WTC11 (cell line): ENCODE measurements at regions of chr11 and their contacts with region 1.

Region 1: DNA sequence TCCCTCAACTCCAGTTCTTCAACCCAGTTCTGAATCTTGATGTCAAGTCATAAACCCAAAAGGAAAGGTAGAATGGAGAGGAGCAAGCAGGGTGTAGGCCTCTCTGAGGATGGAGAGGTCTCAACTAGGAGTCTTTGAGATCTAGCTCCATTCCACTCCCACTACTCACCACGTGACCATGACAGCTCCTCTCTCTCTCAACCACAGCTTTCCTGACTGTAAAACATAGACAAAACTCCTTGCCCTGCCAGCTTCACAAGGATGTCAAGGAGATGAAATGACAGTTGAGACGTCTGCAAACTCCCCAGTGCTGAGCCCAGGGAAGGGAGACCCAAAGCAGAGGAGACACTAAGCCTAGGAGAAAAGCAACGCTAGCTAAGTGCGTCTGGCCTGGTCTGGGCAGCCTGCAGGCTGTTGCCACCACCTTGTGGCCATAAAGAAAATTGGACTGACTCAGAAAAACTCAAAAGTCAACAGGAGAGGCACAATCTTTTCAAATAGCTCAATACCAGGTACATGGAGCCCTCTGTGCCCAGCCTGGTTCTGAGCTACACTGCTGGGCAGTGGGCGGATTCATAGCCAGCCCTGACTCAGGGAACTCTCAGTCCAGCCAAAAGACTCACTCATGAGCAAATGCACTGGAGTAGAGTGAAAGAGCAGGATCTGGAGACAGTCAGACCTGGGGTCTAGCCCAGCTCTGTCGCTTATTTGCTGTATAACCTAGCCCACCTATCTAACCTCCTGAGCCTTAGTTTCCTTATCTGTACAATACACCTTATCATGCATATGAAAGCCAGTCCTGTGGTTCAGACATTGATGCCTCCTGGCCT is 3.4 kb downstream of the CLPB start:
- DNase-seq: peak; percentile 31
- ATAC-seq: peak; percentile 24
- H3K4me3 Mint-ChIP-seq: no peak overlapping the region
- H3K27ac Mint-ChIP-seq: peak overlapping the region; percentile 86
- H3K4me1 Mint-ChIP-seq: peaks cover 9% of the 10 kb centered on the region
- H3K27me3 Mint-ChIP-seq: no peaks in the 10 kb centered on the region
- CTCF ChIP-seq: peak; percentile 39; the same call in 1 of the 2 replicates

Region 2: DNA sequence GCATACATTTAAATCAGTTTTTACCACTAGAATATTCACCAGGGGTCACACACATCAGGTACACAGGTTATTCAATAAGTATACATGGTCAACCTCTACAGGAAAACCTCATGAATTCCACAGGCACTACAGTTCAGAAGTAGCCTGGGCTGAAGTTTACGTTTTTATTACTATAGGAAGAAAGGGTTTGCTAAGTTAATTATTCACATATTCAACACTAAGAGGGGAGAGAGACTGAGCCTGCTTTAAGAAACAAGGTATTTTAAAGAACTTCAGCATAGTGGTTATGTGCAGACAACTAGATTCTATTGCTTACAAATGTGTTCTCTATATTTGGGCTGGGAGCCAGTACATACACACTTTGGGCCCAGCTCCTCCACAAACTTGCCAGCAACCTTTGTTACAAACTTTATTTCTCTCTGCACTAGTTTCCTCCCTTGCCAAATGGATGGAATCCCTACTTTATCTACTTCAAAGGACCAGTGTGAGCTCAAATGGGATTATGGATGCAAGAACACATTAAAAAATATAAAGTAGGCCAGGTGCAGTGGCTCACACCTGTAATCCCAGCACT is 400.4 kb before region 1 on chr11:
- CTCF ChIA-PET with region 1: interaction called, 20 read pairs
- POLR2A ChIA-PET with region 1: no interaction called
- DNase-seq: no peak
- ATAC-seq: no peak
- H3K4me3 Mint-ChIP-seq: no peak overlapping the region
- H3K27ac Mint-ChIP-seq: no peak overlapping the region
- H3K4me1 Mint-ChIP-seq: peaks cover 2% of the 10 kb centered on the region; the same call in 1 of the 2 replicates
- H3K27me3 Mint-ChIP-seq: no peaks in the 10 kb centered on the region
- CTCF ChIP-seq: no peak

Region 3: GRCh38 chr11:72244361-72245262 is 186.3 kb before region 1 on chr11:
- CTCF ChIA-PET with region 1: interaction called, 89 read pairs
- POLR2A ChIA-PET with region 1: no interaction called
- DNase-seq: peak; percentile 69
- ATAC-seq: peak; percentile 29
- H3K4me3 Mint-ChIP-seq: no peak overlapping the region
- H3K27ac Mint-ChIP-seq: no peak overlapping the region
- H3K4me1 Mint-ChIP-seq: peaks cover 30% of the 10 kb centered on the region
- H3K27me3 Mint-ChIP-seq: peaks cover 43% of the 10 kb centered on the region
- CTCF ChIP-seq: no peak

Region 4: GRCh38 chr11:72314600-72315392 is 116.2 kb before region 1 on chr11:
- CTCF ChIA-PET with region 1: interaction called, 22 read pairs
- POLR2A ChIA-PET with region 1: no interaction called
- DNase-seq: no peak
- ATAC-seq: peak; percentile 82
- H3K4me3 Mint-ChIP-seq: no peak overlapping the region
- H3K27ac Mint-ChIP-seq: peak overlapping the region; percentile 90
- H3K4me1 Mint-ChIP-seq: peaks cover 15% of the 10 kb centered on the region
- H3K27me3 Mint-ChIP-seq: no peaks in the 10 kb centered on the region
- CTCF ChIP-seq: no peak

Region 5: GRCh38 chr11:72352859-72353551 is 78.0 kb before region 1 on chr11:
- CTCF ChIA-PET with region 1: interaction called, 103 read pairs
- POLR2A ChIA-PET with region 1: no interaction called
- DNase-seq: peak; percentile 47
- ATAC-seq: peak; percentile 79
- H3K4me3 Mint-ChIP-seq: no peak overlapping the region
- H3K27ac Mint-ChIP-seq: no peak overlapping the region
- H3K4me1 Mint-ChIP-seq: peaks cover 5% of the 10 kb centered on the region
- H3K27me3 Mint-ChIP-seq: no peaks in the 10 kb centered on the region
- CTCF ChIP-seq: no peak

Region 6: DNA sequence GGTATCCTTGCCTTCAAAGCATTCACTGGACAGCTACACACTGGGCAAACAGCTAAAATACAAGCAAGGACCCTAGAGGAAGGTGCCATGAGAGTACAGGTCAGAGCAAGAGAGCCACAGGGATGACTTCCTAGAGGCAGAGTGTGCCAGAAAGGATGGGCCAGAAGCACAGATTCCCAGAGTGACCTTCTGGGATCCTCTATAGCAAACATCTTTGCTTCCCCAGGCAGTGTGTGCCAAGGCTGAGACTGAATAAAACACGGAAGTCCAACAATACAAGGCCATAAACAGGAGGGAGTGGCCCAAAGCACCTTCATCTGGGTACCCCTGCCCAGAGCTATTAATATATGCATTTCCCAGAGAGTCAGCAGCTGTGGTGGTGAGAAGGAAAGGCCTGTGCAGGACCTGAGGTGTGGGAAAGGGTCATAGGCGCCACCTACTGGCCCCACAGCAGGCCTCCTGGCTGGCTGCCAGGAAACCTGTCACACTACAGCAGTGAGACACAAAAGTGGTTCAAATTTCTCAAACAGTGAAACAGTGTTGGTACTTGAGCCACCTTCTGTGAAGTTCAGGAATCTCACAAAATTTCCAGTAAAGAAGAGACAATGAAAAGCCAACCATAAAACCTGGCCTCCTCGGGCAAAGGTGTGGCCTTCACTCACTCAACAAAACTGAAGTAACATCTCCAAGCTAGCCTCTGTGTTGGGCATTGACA is 16.9 kb before region 1 on chr11:
- CTCF ChIA-PET with region 1: interaction called, 73 read pairs
- POLR2A ChIA-PET with region 1: no interaction called
- DNase-seq: peak; percentile 78
- ATAC-seq: peak; percentile 65
- H3K4me3 Mint-ChIP-seq: no peak overlapping the region
- H3K27ac Mint-ChIP-seq: peak overlapping the region; percentile 18; the same call in 1 of the 2 replicates
- H3K4me1 Mint-ChIP-seq: peaks cover 60% of the 10 kb centered on the region
- H3K27me3 Mint-ChIP-seq: no peaks in the 10 kb centered on the region
- CTCF ChIP-seq: peak; percentile 58